ENCODE measurements at regions of chr3 and their contacts with region 1.

Region 1: DNA sequence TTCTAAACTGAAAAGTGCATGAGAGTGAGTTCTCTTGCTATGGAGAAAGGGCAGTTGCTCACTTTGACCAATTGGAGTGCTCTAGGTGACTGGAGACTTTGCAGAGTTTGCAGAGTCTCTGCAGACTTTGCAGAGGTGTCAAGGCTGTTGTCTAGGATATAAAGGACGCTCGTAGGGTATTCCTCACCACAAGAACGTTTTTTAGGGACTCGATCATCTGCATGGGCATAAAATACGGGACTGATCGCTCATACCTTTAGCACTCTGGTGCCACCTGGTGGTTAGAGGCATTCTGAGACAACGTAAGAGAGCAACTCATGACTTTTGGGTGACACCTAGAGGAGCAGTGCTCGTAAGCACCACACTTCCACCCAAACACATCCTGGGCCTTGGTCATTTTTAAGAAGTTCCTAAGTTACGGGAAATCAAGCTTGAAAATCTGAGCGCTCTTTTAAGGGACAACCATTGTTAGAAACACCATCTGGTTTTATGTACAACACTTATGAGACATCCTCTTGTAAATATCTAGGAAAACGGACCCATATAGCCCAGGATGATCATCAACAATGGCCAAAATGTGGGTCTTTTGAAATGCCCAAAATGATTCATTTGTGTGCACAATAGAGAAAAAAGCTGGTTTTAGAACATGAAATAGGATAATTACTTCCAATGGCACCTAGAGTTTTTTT is 51.6 kb upstream of the XCR1 start:
- DNase-seq: peak; percentile 77
- H3K4me3 ChIP-seq: peak overlapping the region; percentile 36
- H3K27ac ChIP-seq: no peak overlapping the region
- H3K4me1 ChIP-seq: no peaks in the 10 kb centered on the region
- H3K27me3 ChIP-seq: no peaks in the 10 kb centered on the region
- CTCF ChIP-seq: peak; percentile 97

Region 2: DNA sequence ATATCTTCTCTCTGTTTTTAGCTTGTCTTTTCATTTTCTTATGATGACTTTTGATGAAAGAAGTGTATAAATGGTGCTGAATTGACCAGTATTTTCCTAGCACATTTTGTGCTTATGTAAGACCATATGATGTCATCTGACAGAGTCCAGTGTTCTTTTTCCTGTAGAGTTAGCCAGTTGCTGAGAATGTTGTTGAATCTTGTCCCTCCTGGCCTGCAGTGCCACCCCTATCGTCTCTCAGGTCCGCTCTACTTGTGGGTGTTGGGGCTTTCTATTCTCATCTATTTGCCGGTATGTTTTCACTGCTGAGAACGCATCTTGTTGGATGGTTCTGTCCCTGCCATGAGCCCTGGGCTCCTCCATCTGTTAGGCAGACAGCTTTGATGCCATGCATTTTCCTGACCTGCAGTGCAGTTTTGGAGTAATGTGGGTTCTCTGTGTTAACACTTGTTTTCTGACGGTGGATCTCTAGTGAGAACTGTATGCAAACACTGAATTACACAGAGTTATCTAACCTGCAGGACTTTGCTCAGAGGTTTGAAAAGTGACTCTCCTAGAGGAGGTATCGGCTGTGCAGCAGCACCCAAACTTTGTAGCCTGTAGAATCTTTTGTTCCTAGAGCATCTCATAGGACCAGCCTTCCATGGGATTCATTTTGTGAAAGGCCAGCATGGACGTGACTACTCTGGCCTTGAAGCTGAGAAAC is 327.2 kb before region 1 on chr3:
- intact Hi-C with region 1: loop called (anchors 10 kb)
- DNase-seq: no peak
- H3K4me3 ChIP-seq: no peak overlapping the region
- H3K27ac ChIP-seq: no peak overlapping the region
- H3K4me1 ChIP-seq: no peaks in the 10 kb centered on the region
- H3K27me3 ChIP-seq: no peaks in the 10 kb centered on the region
- CTCF ChIP-seq: no peak

Region 3: DNA sequence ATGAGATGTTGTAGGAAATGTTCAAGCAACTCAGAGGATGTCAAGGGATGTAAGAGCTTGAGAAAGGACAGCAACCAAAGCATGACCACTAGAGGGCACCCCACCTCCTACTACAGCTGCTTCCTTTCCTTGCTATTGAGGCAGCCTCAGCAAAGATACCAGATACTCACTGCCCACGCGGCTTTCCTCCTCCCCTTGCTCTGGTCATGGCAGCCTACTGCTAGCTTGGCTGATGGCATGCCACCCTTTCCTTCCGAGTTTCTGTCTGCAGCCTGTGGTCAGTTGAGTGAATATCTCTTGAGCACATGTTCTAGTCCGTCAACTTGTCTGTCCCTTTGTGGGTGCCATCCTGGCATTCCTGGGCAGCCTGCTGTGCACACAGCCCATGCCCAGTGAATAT is 140.0 kb before region 1 on chr3:
- intact Hi-C with region 1: loop called (anchors 2 kb)
- DNase-seq: peak; percentile 73
- H3K4me3 ChIP-seq: no peak overlapping the region
- H3K27ac ChIP-seq: peak overlapping the region; percentile 14
- H3K4me1 ChIP-seq: peaks cover 63% of the 10 kb centered on the region
- H3K27me3 ChIP-seq: no peaks in the 10 kb centered on the region
- CTCF ChIP-seq: peak; percentile 93

Measured in left ventricle myocardium inferior (tissue), 1 donor.